Activated CD4-positive, alpha-beta T cell treated with anti-CD3 and anti-CD28 coated beads for 36 hours (primary cell): ENCODE measurements at regions of chr7 and their contacts with region 1.

Region 1: GRCh38 chr7:30625283-30625682 is 30.6 kb downstream of the GARS1 start:
- DNase-seq: no peak
- ATAC-seq: no peak
- H3K4me3 Mint-ChIP-seq: no peak overlapping the region
- H3K27ac Mint-ChIP-seq: no peak overlapping the region
- H3K4me1 Mint-ChIP-seq: peaks cover 13% of the 10 kb centered on the region
- H3K27me3 Mint-ChIP-seq: no peaks in the 10 kb centered on the region

Region 2: DNA sequence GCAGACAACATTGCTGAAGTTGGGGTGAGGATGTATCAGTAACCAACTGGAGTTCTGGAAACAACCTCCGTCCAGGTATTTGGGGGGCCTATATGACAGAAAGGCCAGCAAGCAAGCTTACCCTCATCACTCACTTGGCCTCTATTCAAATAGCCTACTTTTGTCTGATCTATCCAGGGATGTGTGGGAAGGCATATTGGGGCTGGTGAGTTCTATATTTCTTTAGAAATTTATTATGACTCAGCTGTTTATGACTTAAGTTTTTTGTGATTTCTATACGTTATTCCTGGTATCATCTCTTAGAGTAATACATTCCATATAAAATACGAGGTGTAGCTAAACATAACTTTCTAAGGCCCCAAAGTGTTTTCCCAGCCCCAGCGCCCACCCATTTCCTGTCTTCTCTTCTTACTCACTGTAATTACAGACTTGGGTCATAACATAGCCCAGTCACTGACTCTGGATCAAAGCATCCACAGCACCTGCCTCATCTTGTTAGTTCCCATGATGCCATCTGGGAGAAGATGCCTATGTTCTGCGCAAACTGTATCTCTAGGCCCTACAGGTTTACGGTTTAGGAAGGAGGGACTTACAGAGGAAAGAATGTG is 12.5 kb before region 1 on chr7:
- CTCF ChIA-PET with region 1: interaction called, 4 read pairs
- POLR2A ChIA-PET with region 1: interaction called, 11 read pairs
- intact Hi-C with region 1: loop called (anchors 1 to 2 kb)
- DNase-seq: peak; percentile 64
- ATAC-seq: peak; percentile 82
- H3K4me3 Mint-ChIP-seq: no peak overlapping the region
- H3K27ac Mint-ChIP-seq: peak overlapping the region; percentile 81
- H3K4me1 Mint-ChIP-seq: peaks cover 46% of the 10 kb centered on the region
- H3K27me3 Mint-ChIP-seq: no peaks in the 10 kb centered on the region